Endothelial cell of umbilical vein (primary cell): ENCODE measurements at regions of chr9 and their contacts with region 1.

Region 1: DNA sequence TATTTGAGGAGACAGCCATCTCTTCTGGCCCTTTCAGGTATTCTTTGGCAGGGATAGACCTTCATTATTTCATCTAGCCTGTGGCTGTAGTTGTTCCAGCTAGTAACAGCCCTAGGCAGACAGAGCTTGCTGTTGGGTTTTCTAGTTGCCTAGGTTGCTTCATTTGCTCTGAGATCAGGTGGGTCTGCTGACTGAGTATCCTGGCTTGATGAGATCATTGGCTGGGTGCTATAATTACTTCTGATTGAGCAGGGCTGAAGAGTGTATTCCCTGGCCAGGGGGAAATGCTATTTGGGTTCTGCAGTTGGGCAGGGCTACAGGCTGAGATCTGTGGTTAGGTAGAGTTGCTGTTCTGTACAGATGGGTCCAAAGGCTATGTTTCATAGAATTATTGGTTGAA is 456.1 kb downstream of the PSAT1 start:
- DNase-seq: no peak
- H3K4me3 ChIP-seq: no peak overlapping the region
- H3K27ac ChIP-seq: no peak overlapping the region
- H3K4me1 ChIP-seq: no peaks in the 10 kb centered on the region
- H3K27me3 ChIP-seq: no peaks in the 10 kb centered on the region
- CTCF ChIP-seq: no peak
- POLR2A ChIP-seq: no peak

Region 2: GRCh38 chr9:78525986-78526560 is 227.0 kb before region 1 on chr9:
- CTCF ChIA-PET with region 1: no interaction called
- POLR2A ChIA-PET with region 1: no interaction called
- dilution Hi-C with region 1: no loop called
- intact Hi-C with region 1: no loop called
- DNase-seq: no peak
- H3K4me3 ChIP-seq: no peak overlapping the region
- H3K27ac ChIP-seq: no peak overlapping the region
- H3K4me1 ChIP-seq: no peaks in the 10 kb centered on the region
- H3K27me3 ChIP-seq: no peaks in the 10 kb centered on the region
- CTCF ChIP-seq: no peak
- POLR2A ChIP-seq: no peak

Region 3: DNA sequence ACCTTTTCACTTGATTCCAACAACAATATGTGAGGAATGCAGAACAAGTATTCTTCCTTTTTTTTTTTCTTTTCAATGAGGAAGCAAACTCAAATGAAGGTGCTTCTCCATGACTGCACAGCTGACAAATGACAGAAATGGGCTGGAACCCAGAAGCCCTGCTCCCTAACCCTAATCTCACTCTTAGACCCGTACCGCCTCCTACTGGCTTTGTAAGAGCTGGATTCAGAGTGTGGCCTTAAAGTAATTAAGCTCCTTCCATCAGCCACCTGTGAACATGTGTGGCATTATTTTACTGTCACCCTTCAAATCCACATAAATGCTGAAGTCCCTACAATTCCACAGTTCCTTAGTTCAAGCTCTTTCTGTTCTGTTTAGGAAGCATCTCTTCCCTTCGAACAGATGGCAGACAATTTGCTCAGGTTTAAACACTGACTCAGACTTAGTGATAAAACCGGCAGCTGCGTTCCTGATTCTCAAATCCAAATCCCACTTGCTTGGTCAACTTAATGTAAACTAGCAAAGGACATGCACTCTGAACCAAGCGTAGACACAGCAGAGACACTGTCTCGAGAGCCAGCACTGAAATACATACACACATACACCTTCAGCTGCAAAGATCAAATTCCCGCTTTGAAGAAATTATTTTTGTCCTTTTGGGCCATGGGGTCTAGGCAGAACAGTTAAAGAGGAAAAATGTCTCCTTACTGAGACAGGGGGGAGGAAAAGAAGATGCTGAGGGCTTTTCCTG is 502.0 kb after region 1 on chr9:
- CTCF ChIA-PET with region 1: no interaction called
- POLR2A ChIA-PET with region 1: no interaction called
- dilution Hi-C with region 1: no loop called
- intact Hi-C with region 1: loop called (anchors 5 kb)
- DNase-seq: no peak
- H3K4me3 ChIP-seq: no peak overlapping the region
- H3K27ac ChIP-seq: no peak overlapping the region
- H3K4me1 ChIP-seq: no peaks in the 10 kb centered on the region
- H3K27me3 ChIP-seq: peaks cover 6% of the 10 kb centered on the region in 2 experiments
- CTCF ChIP-seq: no peak
- POLR2A ChIP-seq: no peak